HepG2 (cell line): ENCODE measurements at regions of chr9 and their contacts with region 1.

Region 1: GRCh38 chr9:31119882-31120454 is 1264.5 kb upstream of the ACO1 start:
- DNase-seq: peak; percentile 19
- ATAC-seq: peak; percentile 77
- H3K4me3 ChIP-seq: no peak overlapping the region
- H3K27ac ChIP-seq: no peak overlapping the region
- H3K4me1 ChIP-seq: no peaks in the 10 kb centered on the region
- H3K27me3 ChIP-seq: no peaks in the 10 kb centered on the region
- CTCF ChIP-seq: peak; percentile 25; the same call in 1 of the 2 replicates
- EP300 ChIP-seq: no peak
- POLR2A ChIP-seq: no peak
- RAD21 ChIP-seq: no peak

Region 2: DNA sequence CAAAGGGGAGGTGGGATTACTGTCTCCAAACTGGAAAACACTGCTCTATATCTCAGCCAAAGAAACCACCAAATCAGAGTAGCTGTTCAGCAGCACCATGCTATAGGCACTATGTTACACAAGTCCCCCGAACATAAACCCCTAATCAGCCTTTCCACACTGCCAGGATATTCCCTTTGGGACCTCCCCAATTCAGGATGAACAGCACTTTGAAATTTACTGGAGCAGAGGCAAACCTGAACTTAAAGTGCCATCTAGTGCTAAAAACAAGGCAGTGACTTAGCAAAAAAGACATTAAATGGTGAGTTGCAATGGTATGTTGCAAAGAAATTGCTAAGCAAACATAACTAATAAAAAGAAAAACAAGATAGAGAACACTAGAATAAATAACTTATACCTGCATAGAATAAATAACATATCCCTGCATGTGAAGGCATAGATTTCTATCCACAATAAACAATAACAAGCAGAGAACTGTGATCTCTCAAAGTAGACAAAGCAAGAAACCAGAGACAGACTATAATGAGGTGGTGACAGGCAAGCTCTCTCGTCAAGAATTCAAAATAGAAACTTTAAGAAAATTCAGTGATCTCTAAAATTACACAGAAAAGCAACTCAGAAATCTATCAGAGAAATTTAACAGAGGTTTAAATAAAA is 680.1 kb after region 1 on chr9:
- CTCF ChIA-PET with region 1: no interaction called
- POLR2A ChIA-PET with region 1: no interaction called
- in situ Hi-C with region 1: loop called (anchors 25 kb)
- intact Hi-C with region 1: no loop called
- DNase-seq: peak; percentile 24
- ATAC-seq: peak; percentile 71
- H3K4me3 ChIP-seq: no peak overlapping the region
- H3K27ac ChIP-seq: no peak overlapping the region
- H3K4me1 ChIP-seq: no peaks in the 10 kb centered on the region
- H3K27me3 ChIP-seq: no peaks in the 10 kb centered on the region
- CTCF ChIP-seq: peak; percentile 77
- EP300 ChIP-seq: no peak
- POLR2A ChIP-seq: no peak
- RAD21 ChIP-seq: peak; percentile 66

Region 3: DNA sequence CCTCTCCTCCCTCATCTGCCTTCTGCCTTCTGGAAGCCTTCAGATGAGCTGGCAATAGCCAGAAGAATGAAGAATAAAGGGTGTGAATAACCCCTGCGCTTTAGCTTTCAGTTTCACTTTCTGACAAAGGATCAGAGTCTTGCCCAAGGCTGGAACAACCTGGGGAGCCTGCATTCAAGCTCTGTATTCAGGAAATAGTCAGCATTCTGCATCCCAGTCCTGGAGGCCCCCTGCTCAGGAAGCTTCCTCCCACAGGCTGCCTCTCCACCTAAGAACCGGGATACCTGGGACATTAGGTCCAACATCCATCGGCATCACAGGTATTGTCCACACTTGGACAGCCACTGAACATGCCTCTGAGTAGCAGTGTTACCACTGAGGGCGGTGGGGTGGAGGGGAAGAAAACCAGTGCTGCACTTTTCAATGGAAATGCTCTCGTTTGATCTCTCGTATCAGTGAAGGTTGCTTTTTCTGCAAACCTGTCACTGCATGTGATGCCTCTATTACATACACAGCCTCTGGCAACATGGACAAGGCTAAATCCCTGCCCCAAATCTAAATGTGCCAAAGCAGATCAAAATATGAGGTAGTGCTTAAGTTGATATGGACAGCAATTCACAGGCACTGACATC is 1224.7 kb after region 1 on chr9:
- CTCF ChIA-PET with region 1: no interaction called
- POLR2A ChIA-PET with region 1: no interaction called
- in situ Hi-C with region 1: no loop called
- intact Hi-C with region 1: loop called (anchors 10 kb)
- DNase-seq: no peak
- ATAC-seq: peak; percentile 31; the same call in 1 of the 3 replicates
- H3K4me3 ChIP-seq: no peak overlapping the region
- H3K27ac ChIP-seq: no peak overlapping the region
- H3K4me1 ChIP-seq: no peaks in the 10 kb centered on the region
- H3K27me3 ChIP-seq: no peaks in the 10 kb centered on the region; a peak in 1 of 5 replicates
- CTCF ChIP-seq: no peak
- EP300 ChIP-seq: no peak
- POLR2A ChIP-seq: no peak
- RAD21 ChIP-seq: no peak